ENCODE measurements at regions of chr2 and their contacts with region 1.

Region 1: DNA sequence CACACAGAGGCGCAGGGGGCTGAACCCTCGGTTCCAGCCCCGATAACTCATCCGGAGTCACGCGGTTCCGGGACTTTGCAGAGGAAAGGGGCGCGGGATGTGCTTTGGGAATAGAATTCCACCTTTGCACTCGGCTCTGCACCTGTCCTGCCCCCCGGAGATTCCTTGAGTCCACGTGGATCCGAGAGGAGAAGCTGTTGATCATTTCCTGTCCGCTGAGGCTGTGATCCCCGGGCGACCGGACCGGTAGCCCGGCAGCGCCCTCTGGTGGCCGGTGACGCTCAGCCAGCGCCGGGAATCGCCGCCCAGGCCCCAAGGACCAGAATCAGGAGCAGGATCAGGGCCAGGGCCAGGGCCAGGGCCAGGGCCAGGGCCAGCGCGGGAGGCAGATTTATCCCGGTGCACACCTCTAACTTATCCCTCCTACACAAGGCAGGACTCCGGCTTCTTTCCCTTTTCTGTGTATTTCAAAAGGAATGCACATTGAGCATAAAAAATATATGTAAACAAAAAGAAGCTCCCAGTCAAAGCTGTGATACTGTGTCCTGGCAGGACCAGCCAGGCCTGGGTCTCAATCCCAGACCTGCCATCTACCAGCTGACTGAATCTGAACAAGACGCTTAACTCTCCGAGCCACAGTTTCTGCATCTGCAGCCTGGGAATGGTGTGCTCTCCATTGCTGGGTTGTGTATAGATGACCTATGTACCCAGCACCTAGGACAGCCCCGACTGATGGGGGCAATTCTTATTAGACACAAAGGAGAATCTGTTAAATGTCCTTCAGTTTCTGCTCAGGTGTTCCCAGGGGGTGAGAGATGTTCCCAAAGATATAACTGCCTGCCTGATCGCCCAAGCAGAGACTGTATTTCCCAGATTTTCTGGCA is 8.5 kb upstream of the SPATA3 start:
- DNase-seq: peak; percentile 69
- H3K4me3 ChIP-seq: no peak overlapping the region
- H3K27ac ChIP-seq: no peak overlapping the region
- H3K4me1 ChIP-seq: no peaks in the 10 kb centered on the region
- CTCF ChIP-seq: peak; percentile 93

Region 2: DNA sequence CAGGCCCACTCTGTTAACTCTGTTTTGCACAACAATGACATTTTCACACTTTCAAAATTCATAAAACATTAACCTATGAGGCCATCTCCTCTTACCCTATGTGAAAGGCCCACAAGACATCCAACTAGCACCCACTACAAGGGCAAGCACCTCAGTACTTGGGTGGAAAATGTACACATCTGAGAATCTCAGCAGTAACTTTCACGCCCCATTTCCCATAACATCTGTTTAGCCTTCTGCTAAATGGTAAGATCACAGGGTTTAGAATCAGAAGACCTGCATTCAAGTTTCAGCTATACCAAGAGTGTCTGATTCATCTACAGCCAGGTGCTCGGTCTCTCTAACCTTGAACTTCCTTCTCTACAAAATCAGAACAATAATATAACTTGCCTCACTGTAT is 482.2 kb before region 1 on chr2:
- CTCF ChIA-PET with region 1: no interaction called
- POLR2A ChIA-PET with region 1: no interaction called
- intact Hi-C with region 1: no loop called
- DNase-seq: peak; percentile 76
- H3K4me3 ChIP-seq: no peak overlapping the region
- H3K27ac ChIP-seq: peak overlapping the region; percentile 22
- H3K4me1 ChIP-seq: peaks cover 20% of the 10 kb centered on the region
- CTCF ChIP-seq: no peak

Region 3: GRCh38 chr2:230824406-230824978 is 162.9 kb before region 1 on chr2:
- CTCF ChIA-PET with region 1: no interaction called
- POLR2A ChIA-PET with region 1: no interaction called
- intact Hi-C with region 1: loop called (anchors 1 kb)
- DNase-seq: peak; percentile 82
- H3K4me3 ChIP-seq: no peak overlapping the region
- H3K27ac ChIP-seq: no peak overlapping the region
- H3K4me1 ChIP-seq: no peaks in the 10 kb centered on the region
- CTCF ChIP-seq: peak; percentile 80

Region 4: DNA sequence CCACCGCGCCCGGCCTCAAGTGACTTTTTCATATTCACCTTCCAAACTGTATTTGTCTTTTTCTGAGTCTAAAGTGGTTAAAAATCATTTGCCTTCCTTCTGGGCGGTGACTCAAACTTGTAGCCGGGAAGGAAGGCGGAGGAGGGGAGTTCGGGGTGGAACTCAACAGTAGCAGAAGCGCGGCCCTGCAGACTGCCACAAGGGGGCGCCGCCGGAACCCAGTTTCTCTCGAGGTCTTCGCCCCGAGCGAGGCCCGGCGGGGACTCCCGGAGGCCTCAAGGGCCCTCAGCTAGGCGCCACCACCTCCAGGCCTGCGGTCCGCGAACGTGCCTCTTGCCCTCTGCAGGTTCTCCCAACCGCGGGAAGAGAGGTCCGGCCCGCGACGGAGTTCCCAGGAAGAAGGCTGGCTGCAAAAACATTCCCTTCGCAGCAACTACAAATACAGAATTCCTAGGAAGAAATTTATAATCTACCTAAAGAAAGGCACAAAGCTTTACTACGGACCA is 139.4 kb before region 1 on chr2:
- CTCF ChIA-PET with region 1: no interaction called
- POLR2A ChIA-PET with region 1: no interaction called
- intact Hi-C with region 1: loop called (anchors 2 kb)
- DNase-seq: peak; percentile 64
- H3K4me3 ChIP-seq: no peak overlapping the region
- H3K27ac ChIP-seq: no peak overlapping the region
- H3K4me1 ChIP-seq: no peaks in the 10 kb centered on the region
- CTCF ChIP-seq: peak; percentile 82

Region 5: DNA sequence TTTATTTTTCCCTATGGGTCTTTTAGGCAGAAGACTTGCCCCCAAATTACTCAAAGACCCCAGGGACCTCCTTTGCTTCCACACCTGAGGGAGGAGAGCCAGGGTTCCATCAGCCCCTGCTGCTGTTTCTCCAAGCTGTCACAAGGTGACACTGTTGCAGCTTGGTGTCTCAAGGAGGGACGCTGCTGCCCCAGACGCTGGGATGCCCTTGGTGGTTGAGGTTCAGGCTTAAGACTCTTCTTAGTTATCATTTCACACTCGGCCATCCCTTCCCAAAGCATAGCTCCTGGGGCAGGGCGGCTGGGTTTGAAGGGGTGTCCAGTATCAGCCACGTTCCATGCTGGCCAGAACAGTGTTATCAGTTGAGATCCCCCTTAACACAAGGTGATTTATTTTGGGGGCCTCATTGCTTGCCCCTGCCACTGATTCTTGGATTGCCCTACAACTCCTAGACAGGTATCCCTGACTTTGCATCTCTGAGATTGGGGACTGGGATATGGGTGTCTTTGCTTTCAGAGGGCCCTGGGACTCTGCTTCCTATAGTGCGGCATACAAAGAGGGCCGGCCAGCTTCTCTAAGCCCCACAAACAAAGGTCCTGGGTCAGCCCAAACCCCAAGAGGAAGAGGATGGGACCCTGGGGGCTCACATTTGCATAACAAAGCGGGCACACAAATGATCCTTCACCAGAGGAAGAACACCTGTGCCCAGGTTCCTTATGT is 85.0 kb before region 1 on chr2:
- CTCF ChIA-PET with region 1: no interaction called
- POLR2A ChIA-PET with region 1: no interaction called
- intact Hi-C with region 1: loop called (anchors 1 kb)
- DNase-seq: peak; percentile 52
- H3K4me3 ChIP-seq: no peak overlapping the region
- H3K27ac ChIP-seq: no peak overlapping the region
- H3K4me1 ChIP-seq: peaks cover 7% of the 10 kb centered on the region
- CTCF ChIP-seq: peak; percentile 82

Region 6: GRCh38 chr2:230924470-230925341 is 62.7 kb before region 1 on chr2 and contains the start of gene GPR55:
- CTCF ChIA-PET with region 1: no interaction called
- POLR2A ChIA-PET with region 1: no interaction called
- intact Hi-C with region 1: loop called (anchors 5 kb)
- DNase-seq: peak; percentile 25
- H3K4me3 ChIP-seq: no peak within 1 kb of the TSS
- H3K27ac ChIP-seq: no peak within 1 kb of the TSS
- H3K4me1 ChIP-seq: no peaks in the 10 kb centered on the region
- CTCF ChIP-seq: peak; percentile 52
- total RNA-seq, gene GPR55: 0.22 TPM in 1 of 2 replicates, not detected in the other

Measured in OCI-LY7 (cell line).